ENCODE measurements at regions of chr4 and their contacts with region 1.

Region 1: GRCh38 chr4:108030332-108030731 is 40.6 kb downstream of the HADH start:
- DNase-seq: peak; percentile 86
- H3K4me3 Mint-ChIP-seq: no peak overlapping the region
- H3K27ac Mint-ChIP-seq: peak overlapping the region; percentile 83
- H3K4me1 Mint-ChIP-seq: peaks cover 77% of the 10 kb centered on the region
- H3K27me3 Mint-ChIP-seq: no peaks in the 10 kb centered on the region

Region 2: GRCh38 chr4:108018040-108018883 is 12.1 kb before region 1 on chr4:
- CTCF ChIA-PET with region 1: interaction called, 50 read pairs
- DNase-seq: peak; percentile 91
- H3K4me3 Mint-ChIP-seq: no peak overlapping the region
- H3K27ac Mint-ChIP-seq: peak overlapping the region; percentile 66
- H3K4me1 Mint-ChIP-seq: peaks cover 23% of the 10 kb centered on the region
- H3K27me3 Mint-ChIP-seq: no peaks in the 10 kb centered on the region

Region 3: DNA sequence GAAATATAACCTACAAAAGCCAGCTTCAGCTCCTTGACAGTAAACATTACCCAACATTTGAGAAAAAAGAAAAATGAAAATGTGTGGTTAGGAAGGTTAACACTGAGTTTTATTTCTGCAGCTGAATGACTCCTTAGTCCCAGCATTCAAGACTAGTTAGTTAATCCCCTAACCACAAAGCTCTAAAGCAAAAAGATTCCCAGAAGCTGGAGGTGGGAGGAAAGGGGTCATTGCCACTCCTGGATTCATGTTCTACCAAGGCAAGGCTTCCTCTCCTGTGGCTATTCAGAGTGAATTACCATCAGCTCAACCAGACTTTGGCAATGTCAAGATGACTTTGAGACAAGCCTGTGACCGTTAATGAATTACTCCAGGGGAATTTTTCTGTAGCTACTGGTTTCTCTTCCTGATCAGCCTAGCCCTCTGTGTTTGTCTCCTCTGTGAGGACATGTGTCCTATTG is 22.9 kb after region 1 on chr4:
- CTCF ChIA-PET with region 1: interaction called, 25 read pairs
- DNase-seq: no peak
- H3K4me3 Mint-ChIP-seq: no peak overlapping the region
- H3K27ac Mint-ChIP-seq: peak overlapping the region; percentile 97
- H3K4me1 Mint-ChIP-seq: peaks cover 93% of the 10 kb centered on the region
- H3K27me3 Mint-ChIP-seq: no peaks in the 10 kb centered on the region

Region 4: DNA sequence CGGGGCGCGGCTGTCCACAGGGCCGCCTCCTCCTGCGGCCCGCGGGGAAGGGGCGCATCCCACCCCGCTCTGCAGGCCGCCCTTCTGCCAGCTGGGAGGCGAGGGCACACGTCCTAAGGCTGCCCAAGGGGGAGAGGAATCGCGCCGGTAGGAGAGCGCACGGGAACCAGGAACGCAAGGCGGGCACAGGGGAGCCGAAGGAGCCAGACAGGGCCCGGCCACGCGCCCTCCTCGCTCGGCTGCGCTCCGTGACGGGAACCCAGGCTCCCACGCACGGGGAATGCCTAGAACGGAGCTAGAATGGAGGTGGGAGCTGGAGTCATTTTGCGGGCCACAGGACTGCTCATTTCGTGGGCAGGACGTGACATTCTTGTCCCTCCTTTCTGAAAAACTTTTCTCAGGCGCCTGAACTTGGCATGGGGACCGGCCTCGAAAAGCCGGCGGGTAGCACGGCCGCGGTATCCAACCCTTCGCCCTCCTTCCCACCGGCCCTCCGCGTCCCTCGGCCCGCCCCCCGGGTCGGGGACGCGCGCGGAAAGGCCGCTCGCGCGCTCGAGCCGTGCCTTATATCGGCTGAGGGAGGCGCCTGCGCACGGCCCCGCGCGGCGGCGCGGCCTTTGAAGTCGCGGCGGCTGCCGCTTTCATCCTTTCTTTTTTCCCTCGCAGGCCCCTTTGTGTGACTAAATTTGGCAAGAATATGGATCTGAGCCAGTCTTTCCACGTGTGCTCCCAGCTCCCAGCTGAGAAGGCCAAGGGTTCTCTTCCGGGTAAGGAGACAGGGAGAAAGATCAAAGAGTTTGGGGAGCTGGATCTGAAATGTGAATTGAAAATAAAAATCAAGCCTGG is 142.6 kb after region 1 on chr4:
- CTCF ChIA-PET with region 1: interaction called, 15 read pairs
- DNase-seq: peak; percentile 80
- H3K4me3 Mint-ChIP-seq: peak overlapping the region; percentile 97
- H3K27ac Mint-ChIP-seq: peak overlapping the region; percentile 94
- H3K4me1 Mint-ChIP-seq: peaks cover 64% of the 10 kb centered on the region
- H3K27me3 Mint-ChIP-seq: peaks cover 33% of the 10 kb centered on the region

Region 5: GRCh38 chr4:108255203-108255747 is 224.9 kb after region 1 on chr4:
- CTCF ChIA-PET with region 1: no interaction called
- DNase-seq: no peak
- H3K4me3 Mint-ChIP-seq: no peak overlapping the region
- H3K27ac Mint-ChIP-seq: no peak overlapping the region
- H3K4me1 Mint-ChIP-seq: no peaks in the 10 kb centered on the region
- H3K27me3 Mint-ChIP-seq: no peaks in the 10 kb centered on the region

Region 6: DNA sequence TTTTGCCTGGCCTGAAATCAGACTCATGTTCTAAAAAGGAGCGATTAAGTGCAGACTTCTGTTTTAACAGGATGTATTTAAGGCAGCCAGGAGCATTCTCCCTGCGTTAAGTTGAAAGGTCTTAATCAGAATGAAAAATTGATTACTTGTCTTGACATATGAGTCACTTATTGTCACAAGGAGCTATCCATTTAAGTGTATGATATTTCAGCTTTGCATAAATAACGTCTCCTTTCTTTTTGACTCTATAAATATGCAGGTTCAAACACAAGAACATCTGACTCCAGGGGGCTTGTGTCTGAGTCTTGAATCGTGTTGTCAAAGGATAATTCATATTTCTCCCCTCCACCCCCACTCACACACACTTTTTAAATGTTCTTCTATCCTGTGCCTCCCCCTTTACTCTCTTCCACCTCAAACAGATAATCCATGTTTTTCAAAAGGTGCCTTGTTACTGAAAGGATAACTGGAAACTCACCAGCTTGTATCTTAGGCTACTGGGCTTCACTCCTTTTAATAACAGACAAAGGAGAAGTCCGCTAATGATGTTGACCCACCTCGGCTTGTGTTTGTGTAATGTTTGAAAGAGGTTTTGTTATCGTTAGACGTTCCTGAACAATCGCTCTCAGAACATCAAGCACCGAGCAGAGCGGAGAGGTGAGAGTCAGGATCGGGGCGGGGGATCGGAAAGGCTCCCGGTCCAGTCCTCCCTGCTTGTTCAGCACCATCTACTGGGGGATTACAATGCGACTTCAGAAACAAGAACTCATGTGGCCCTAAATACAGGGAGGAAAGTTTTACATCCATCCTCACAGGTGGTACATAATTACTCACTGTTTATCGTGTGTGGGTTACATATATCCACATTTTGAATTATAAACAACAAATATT is 482.5 kb after region 1 on chr4:
- CTCF ChIA-PET with region 1: interaction called, 10 read pairs
- DNase-seq: peak; percentile 70
- H3K4me3 Mint-ChIP-seq: peak overlapping the region; percentile 19
- H3K27ac Mint-ChIP-seq: no peak overlapping the region
- H3K4me1 Mint-ChIP-seq: peaks cover 22% of the 10 kb centered on the region
- H3K27me3 Mint-ChIP-seq: peaks cover 12% of the 10 kb centered on the region